Left cardiac atrium (tissue), 4 donors: ENCODE measurements at regions of chr2 and their contacts with region 1.

Region 1: GRCh38 chr2:100262555-100263320 is 59.6 kb downstream of the LONRF2 start:
- DNase-seq: peak; percentile 71
- ATAC-seq: peak; percentile 49 to 69

Region 2: DNA sequence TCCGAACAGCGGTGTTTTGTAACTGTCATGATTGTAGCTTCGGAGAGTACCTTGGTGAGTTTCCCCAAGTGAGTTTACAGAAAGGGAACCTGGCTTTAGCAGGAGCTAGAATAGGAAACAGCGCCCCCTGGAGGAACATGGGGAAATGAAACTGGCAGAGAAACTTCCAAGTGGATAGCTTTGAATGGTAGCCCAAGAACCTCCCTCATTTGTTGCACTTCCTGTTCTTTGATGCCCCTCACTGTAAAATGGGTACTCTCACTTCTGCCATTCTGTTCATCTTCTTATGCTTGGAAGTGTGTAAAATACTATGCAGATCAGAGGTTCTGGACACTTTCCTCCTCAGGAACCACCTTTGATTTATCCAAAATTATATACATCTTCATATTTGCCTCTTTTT is 118.5 kb after region 1 on chr2:
- intact Hi-C with region 1: loop called (anchors 2 to 5 kb)
- DNase-seq: peak; percentile 70
- ATAC-seq: peak; percentile 78 to 88

Region 3: GRCh38 chr2:100670232-100670631 is 407.5 kb after region 1 on chr2:
- intact Hi-C with region 1: no loop called
- DNase-seq: no peak
- ATAC-seq: no peak